B cell (primary cell): ENCODE measurements at regions of chr2 and their contacts with region 1.

Region 1: DNA sequence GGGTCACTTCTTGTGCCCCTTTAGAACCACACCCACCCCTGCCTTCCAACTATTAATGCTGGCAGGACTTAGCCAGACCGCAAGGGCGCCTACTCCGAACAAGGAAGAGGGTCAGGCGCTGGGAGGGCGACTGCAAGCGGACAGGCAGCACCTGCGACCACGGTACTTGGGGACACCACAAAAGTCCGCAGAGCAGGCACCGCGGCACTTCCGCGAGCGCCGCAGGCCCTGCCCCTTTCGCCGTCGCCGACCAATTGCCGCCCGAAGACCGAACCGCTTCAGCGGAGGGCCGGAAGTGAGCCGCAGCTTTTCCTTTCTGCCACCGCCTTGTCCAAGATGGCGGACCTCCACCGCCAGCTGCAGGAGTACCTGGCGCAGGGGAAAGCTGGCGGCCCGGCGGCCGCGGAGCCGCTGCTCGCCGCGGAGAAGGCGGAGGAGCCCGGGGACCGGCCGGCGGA is at the start of gene SFT2D3:
- DNase-seq: peak; percentile 95
- ATAC-seq: peak; percentile 74
- H3K4me3 ChIP-seq: peak within 1 kb of the TSS; percentile 69 to 84 (median 77)
- H3K4me3 Mint-ChIP-seq: peak within 1 kb of the TSS; percentile 98
- H3K27ac ChIP-seq: peak within 1 kb of the TSS; percentile 91 to 95
- H3K27ac Mint-ChIP-seq: peak within 1 kb of the TSS; percentile 100
- H3K4me1 ChIP-seq: peaks cover 29% of the 10 kb centered on the region in 2 donors
- H3K4me1 Mint-ChIP-seq: peaks cover 35% of the 10 kb centered on the region
- H3K27me3 ChIP-seq: no peaks in the 10 kb centered on the region
- H3K27me3 Mint-ChIP-seq: no peaks in the 10 kb centered on the region
- CTCF ChIP-seq: no peak
- total RNA-seq, gene SFT2D3: 13.6 and 14.2 TPM in 2 replicates

Region 2: DNA sequence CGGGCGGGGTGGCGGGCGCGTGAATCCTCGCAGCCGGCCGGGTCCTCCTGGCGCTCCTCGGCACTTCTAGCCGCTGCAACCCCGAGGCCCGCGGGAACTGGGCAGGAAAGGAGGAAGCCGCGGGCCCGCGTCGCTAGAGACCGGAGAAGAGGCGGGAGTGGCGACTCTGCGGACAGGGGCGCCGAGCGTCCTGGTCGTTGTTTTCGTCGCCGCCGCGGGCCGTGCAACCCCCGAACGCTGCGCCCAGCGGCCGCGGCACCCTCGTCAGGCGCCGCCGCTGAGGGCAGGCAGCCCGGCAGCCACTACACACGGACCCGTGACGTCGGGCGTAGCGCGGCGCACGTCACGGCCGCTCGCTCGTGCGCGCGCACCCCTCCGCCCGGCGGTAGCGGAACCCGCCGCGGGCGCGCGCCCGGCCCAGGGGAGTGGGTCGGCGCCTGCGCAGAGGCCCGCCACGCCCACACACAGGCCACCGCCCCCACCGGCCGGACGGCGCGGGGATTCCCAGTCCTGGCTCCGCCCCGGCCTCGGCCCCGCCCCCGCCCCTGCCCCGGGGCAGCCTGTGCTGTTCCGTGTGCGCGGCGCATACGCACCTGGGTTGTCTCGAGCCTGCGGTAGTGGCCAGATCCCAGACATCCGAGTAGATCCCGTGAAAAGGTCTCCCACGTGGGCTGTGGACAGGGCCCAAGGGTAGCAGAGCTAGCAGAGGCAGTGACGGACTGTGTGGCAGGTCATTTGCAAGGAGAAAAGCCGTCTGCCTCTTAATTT is 313.4 kb before region 1 on chr2 and contains the start of gene MAP3K2:
- CTCF ChIA-PET with region 1: no interaction called
- POLR2A ChIA-PET with region 1: no interaction called
- intact Hi-C with region 1: loop called (anchors 2 kb)
- DNase-seq: peak; percentile 97
- ATAC-seq: peak; percentile 74
- H3K4me3 ChIP-seq: peak within 1 kb of the TSS; percentile 73 to 95 (median 80)
- H3K4me3 Mint-ChIP-seq: peak within 1 kb of the TSS; percentile 92
- H3K27ac ChIP-seq: peak within 1 kb of the TSS; percentile 97 to 99
- H3K27ac Mint-ChIP-seq: peak within 1 kb of the TSS; percentile 99
- H3K4me1 ChIP-seq: peaks cover 50 to 57% of the 10 kb centered on the region in 2 donors
- H3K4me1 Mint-ChIP-seq: peaks cover 80% of the 10 kb centered on the region
- H3K27me3 ChIP-seq: no peaks in the 10 kb centered on the region
- H3K27me3 Mint-ChIP-seq: no peaks in the 10 kb centered on the region
- CTCF ChIP-seq: no peak
- total RNA-seq, gene MAP3K2: 112 and 118 TPM in 2 replicates

Region 3: DNA sequence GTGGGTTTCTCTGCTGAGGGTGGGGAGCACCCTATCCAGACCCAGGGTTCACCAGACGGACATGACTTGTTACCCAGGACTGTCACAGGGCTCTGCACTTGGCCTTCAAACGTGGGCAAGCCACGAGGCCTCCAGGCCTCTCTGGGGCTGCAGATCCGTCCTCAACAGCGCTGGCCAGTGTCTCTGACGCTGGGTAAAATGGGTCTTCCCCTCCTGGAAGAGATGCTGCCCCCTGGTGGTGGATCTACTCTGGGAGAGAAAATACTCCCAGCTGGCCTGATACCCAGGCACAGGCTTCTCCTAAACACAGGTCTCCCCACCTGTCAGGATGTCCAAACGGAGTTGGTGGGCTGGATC is 51.6 kb before region 1 on chr2:
- CTCF ChIA-PET with region 1: interaction called, 8 read pairs
- POLR2A ChIA-PET with region 1: no interaction called
- intact Hi-C with region 1: loop called (anchors 2 kb)
- DNase-seq: peak; percentile 87
- ATAC-seq: peak; percentile 71
- H3K4me3 ChIP-seq: peak overlapping the region in 1 of 5 experiments; percentile 6
- H3K4me3 Mint-ChIP-seq: peak overlapping the region; percentile 74
- H3K27ac ChIP-seq: no peak overlapping the region
- H3K27ac Mint-ChIP-seq: peak overlapping the region; percentile 82
- H3K4me1 ChIP-seq: peaks cover 30 to 66% of the 10 kb centered on the region in 2 donors
- H3K4me1 Mint-ChIP-seq: peaks cover 64% of the 10 kb centered on the region
- H3K27me3 ChIP-seq: no peaks in the 10 kb centered on the region
- H3K27me3 Mint-ChIP-seq: no peaks in the 10 kb centered on the region
- CTCF ChIP-seq: peak; percentile 92

Region 4: GRCh38 chr2:127810619-127811396 is 109.6 kb after region 1 on chr2 and contains the start of gene WDR33:
- CTCF ChIA-PET with region 1: interaction called, 3 read pairs
- POLR2A ChIA-PET with region 1: interaction called, 4 read pairs
- intact Hi-C with region 1: loop called (anchors 2 kb)
- DNase-seq: peak; percentile 96
- ATAC-seq: peak; percentile 97
- H3K4me3 ChIP-seq: peak within 1 kb of the TSS; percentile 66 to 99 (median 78)
- H3K4me3 Mint-ChIP-seq: peak within 1 kb of the TSS; percentile 97
- H3K27ac ChIP-seq: peak within 1 kb of the TSS; percentile 91 to 96
- H3K27ac Mint-ChIP-seq: peak within 1 kb of the TSS; percentile 99
- H3K4me1 ChIP-seq: peaks cover 30 to 37% of the 10 kb centered on the region in 2 donors
- H3K4me1 Mint-ChIP-seq: peaks cover 46% of the 10 kb centered on the region
- H3K27me3 ChIP-seq: no peaks in the 10 kb centered on the region
- H3K27me3 Mint-ChIP-seq: no peaks in the 10 kb centered on the region
- CTCF ChIP-seq: no peak
- total RNA-seq, gene WDR33: 95.2 and 101 TPM in 2 replicates

Region 5: DNA sequence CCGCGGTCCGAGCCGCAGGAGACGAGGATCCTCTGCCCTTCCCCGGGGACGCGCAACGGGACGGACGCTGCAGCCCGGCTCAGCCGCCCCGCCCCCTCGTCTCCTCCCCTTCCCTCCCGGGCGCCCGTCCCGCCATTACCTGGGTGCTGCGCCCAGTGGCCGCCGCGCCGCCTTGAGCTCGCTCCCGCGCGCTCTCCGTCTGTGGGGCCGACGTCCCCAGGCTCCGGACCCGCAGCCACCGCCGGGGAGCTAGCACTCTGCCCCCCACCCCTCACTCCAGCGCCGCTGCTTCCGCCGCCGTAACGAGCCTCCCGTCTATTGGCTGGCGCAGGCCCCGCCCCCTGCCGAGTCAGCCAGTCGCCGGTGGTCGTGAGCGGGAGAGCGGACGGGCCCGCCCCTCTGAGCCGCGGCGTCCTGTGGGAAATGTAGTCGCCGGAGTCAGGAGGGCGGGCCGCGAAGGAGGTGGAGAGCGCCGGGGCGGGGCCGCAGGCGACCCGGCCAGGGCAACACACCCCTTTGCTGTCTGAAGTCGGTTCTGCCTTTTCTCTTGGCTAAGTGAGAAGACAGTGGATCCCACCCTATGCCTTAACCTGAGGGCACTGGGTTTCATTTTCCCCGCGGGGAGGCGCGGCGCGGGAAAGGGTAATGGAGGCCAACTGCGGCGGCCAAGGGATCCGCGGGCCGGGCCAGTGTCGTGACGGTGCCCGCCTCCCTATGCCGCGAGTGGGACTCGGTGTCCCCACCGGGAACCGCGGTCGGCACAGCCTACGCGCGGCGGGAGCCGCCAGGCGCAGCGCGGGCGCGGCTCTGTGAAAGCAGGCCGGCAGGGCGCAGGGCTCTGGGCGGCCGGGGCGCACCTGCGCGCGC is 326.8 kb after region 1 on chr2 and contains the start of gene SAP130:
- CTCF ChIA-PET with region 1: no interaction called
- POLR2A ChIA-PET with region 1: no interaction called
- intact Hi-C with region 1: loop called (anchors 5 kb)
- DNase-seq: peak; percentile 98
- ATAC-seq: peak; percentile 77
- H3K4me3 ChIP-seq: peak within 1 kb of the TSS; percentile 38 to 93 (median 87)
- H3K4me3 Mint-ChIP-seq: peak within 1 kb of the TSS; percentile 97
- H3K27ac ChIP-seq: peak within 1 kb of the TSS; percentile 68 to 81
- H3K27ac Mint-ChIP-seq: peak within 1 kb of the TSS; percentile 97
- H3K4me1 ChIP-seq: peaks cover 13 to 14% of the 10 kb centered on the region in 2 donors
- H3K4me1 Mint-ChIP-seq: peaks cover 20% of the 10 kb centered on the region
- H3K27me3 ChIP-seq: no peaks in the 10 kb centered on the region
- H3K27me3 Mint-ChIP-seq: peaks cover 5% of the 10 kb centered on the region
- CTCF ChIP-seq: no peak
- total RNA-seq, gene SAP130: 35.2 and 40.1 TPM in 2 replicates

Region 6: GRCh38 chr2:128644718-128645256 is 943.6 kb after region 1 on chr2:
- CTCF ChIA-PET with region 1: no interaction called
- POLR2A ChIA-PET with region 1: no interaction called
- intact Hi-C with region 1: no loop called
- DNase-seq: no peak
- ATAC-seq: no peak
- H3K4me3 ChIP-seq: no peak overlapping the region
- H3K4me3 Mint-ChIP-seq: no peak overlapping the region
- H3K27ac ChIP-seq: no peak overlapping the region
- H3K27ac Mint-ChIP-seq: no peak overlapping the region
- H3K4me1 ChIP-seq: no peaks in the 10 kb centered on the region
- H3K4me1 Mint-ChIP-seq: no peaks in the 10 kb centered on the region
- H3K27me3 ChIP-seq: no peaks in the 10 kb centered on the region
- H3K27me3 Mint-ChIP-seq: peaks cover 3% of the 10 kb centered on the region
- CTCF ChIP-seq: no peak